GM10248 (cell line): ENCODE measurements at regions of chr3 and their contacts with region 1.

Region 1: DNA sequence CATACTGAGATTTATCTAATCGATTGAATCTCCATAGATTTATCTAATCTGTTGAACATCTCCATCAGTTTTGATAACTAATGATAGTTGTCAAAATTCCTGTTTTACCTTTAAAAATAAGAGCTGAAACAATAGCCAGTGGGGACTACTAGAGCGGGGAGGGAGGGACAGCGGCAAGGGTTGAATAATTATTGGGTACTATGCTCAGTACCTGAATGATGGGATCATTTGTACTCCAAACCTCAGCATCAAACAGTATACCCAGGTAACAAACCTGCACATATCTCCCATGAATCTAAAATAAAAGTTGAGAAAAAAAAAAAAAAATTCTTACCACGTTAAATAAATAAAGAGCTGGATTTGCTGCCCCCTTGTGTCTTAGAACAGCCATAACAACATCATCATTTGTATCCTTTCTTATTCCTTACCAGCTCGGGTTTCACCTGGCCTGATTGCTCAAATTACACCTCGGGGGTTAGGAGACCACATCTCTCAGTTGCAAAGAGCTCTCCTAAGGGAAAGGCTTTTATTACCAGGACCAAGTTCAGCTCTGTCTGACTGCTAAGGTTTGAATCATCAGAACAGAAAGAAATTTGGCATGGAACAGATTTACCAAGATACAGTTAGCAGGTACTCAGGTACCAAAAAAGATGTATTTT is 25.7 kb upstream of the RPL39L start:
- DNase-seq: peak; percentile 51
- CTCF ChIP-seq: peak; percentile 47

Region 2: GRCh38 chr3:186381424-186382216 is 783.4 kb before region 1 on chr3:
- CTCF ChIA-PET with region 1: no interaction called
- POLR2A ChIA-PET with region 1: no interaction called
- DNase-seq: no peak
- CTCF ChIP-seq: no peak

Region 3: DNA sequence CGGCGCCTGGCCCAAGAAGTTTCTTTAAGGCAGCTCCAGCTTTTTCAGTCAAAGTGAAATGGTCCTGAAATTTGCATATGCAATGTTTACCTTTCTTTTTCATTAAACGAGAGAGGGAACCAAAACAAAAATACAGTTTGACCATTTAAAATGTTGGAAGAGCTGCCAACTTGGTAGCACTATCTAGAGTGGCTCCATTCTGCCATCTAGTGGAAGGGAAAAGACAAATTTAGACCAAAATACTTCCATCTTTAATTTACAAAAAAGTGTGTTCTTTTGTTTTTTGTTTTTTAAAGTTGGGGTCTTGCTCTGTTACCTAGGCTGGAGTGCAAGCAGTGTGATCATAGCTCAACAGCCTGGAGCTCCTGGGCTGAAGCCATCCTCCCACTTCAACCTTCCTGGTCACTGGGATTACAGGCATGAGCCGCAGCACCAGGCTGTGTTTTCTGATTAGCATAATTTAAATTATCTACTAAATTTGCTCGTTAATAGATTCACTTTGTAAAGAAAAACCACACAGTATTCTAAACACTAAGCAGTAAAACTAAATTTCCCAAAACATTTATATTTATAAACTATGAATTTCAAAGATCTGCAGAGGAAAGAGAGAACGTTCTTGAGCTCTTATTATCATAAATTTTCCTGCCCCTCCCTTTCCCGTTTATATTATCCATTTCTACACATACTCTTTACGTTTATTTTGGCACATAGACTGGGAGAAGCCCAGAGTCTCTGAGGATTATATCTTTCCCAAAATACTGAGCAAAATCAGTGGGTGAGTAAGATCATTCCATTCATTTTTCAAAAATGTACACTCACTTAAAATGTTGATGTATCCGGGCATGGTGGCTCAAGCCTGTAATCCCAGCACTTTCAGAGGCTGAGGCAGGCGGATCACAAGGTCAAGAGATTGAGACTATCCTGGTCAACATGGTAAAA is 343.3 kb before region 1 on chr3:
- CTCF ChIA-PET with region 1: interaction called, 10 read pairs
- POLR2A ChIA-PET with region 1: no interaction called
- DNase-seq: peak; percentile 52
- CTCF ChIP-seq: peak; percentile 48

Region 4: DNA sequence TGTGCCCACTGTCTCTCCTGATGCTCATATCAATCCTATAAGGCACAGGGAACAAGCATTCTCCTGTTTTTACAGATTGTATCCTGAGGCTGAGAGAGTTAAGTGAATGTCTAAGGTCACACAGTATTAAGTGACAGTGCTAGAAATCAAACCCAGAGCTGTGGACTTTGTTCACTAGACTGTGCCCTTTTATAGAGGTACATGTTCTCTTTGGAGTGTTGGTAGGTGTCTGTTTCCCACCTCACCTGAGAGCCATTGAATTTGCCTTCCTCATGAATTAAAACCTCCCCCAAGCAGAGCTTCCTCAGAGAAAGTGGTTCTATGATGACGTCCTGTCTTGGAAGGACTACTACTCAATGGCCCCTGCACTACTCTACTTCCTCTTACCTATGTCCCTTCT is 310.1 kb before region 1 on chr3:
- CTCF ChIA-PET with region 1: interaction called, 57 read pairs
- POLR2A ChIA-PET with region 1: no interaction called
- DNase-seq: no peak
- CTCF ChIP-seq: no peak

Region 5: GRCh38 chr3:187112934-187113793 is 51.9 kb before region 1 on chr3:
- CTCF ChIA-PET with region 1: interaction called, 104 read pairs
- POLR2A ChIA-PET with region 1: no interaction called
- DNase-seq: peak; percentile 24
- CTCF ChIP-seq: peak; percentile 57

Region 6: GRCh38 chr3:187150599-187150998 is 14.4 kb before region 1 on chr3:
- CTCF ChIA-PET with region 1: interaction called, 30 read pairs
- POLR2A ChIA-PET with region 1: no interaction called
- DNase-seq: no peak
- CTCF ChIP-seq: peak; percentile 54

Region 7: DNA sequence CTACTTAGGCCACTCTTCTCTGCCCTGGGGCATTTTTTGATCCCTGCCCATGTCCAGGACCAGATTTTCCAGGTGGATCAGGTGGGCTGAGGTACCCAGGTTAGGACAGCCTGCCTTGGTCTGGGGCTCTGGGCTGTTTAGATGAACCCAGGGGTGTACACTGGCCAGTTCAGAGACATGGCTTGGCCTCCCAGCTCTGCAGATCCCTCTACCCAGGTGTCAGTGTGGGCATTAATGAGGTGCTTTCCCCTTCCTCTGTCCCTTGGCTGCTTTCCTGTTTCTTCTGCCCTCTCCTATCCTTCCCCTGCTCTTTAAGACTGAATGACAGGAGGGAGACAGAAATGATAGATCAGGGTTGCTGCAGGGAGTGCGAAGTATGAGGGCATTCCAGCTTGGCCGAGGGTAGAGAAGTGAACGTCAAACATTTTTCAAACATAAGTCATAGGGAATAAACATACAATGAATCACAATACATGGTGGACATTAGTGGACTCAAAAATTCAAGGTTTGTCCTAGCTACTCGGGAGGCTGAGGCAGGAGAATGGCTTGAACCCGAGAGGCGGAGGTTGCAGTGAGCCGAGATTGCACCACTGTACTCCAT is 62.7 kb after region 1 on chr3:
- CTCF ChIA-PET with region 1: no interaction called
- POLR2A ChIA-PET with region 1: no interaction called
- DNase-seq: no peak
- CTCF ChIP-seq: no peak

Region 8: GRCh38 chr3:187315872-187316271 is 150.9 kb after region 1 on chr3:
- CTCF ChIA-PET with region 1: no interaction called
- POLR2A ChIA-PET with region 1: no interaction called
- DNase-seq: no peak
- CTCF ChIP-seq: no peak

Region 9: GRCh38 chr3:187473778-187474406 is 308.9 kb after region 1 on chr3:
- CTCF ChIA-PET with region 1: no interaction called
- POLR2A ChIA-PET with region 1: no interaction called
- DNase-seq: no peak
- CTCF ChIP-seq: no peak